PC-3 (cell line): ENCODE measurements at regions of chr1 and their contacts with region 1.

Region 1: DNA sequence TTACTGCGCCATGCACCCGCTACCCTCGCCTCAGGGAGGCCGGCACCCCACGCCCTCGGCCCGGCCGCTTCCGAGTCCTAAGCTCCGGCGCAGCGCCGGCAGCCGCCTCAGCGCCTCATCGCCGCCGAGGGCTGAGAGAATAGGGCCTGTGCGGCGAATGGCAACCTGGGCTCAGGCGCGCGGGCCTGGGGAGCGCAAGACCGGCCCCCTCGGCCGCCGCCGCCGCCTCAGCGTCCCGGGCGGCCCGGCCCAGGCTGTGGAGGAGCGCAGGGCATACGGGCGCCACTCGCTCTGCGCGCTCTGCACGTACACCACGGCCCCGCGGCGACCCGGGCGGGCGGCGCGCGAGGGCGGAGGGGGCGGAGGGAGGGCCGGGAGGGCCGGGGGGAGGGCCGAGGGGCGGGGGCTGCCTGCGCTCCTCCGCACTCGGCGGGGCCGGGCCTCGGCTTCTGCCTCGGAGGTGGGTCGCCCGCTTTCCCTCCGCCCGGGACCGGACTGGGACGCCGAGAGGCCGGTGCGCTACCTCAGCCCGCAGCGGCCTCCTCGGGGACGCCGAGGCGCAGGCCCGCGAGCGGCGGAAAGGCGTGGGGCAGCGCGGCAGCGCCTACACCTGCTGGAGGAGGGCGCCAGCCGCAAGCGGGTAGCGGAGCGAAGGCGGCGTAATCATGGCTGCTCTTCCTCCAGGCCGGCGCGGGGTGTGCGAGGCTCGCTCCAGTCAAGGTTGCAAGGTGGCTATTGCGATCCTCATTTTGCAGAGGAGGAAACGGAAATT is at the start of gene EGLN1:
- DNase-seq: peak; percentile 88
- ATAC-seq: peak; percentile 69
- H3K4me3 ChIP-seq: peak within 1 kb of the TSS; percentile 85
- H3K27ac ChIP-seq: peak within 1 kb of the TSS; percentile 77
- H3K4me1 ChIP-seq: peaks cover 43% of the 10 kb centered on the region
- H3K27me3 ChIP-seq: no peaks in the 10 kb centered on the region
- CTCF ChIP-seq: peak; percentile 48
- total RNA-seq, gene EGLN1: 37.0 and 44.9 TPM in 2 replicates

Region 2: DNA sequence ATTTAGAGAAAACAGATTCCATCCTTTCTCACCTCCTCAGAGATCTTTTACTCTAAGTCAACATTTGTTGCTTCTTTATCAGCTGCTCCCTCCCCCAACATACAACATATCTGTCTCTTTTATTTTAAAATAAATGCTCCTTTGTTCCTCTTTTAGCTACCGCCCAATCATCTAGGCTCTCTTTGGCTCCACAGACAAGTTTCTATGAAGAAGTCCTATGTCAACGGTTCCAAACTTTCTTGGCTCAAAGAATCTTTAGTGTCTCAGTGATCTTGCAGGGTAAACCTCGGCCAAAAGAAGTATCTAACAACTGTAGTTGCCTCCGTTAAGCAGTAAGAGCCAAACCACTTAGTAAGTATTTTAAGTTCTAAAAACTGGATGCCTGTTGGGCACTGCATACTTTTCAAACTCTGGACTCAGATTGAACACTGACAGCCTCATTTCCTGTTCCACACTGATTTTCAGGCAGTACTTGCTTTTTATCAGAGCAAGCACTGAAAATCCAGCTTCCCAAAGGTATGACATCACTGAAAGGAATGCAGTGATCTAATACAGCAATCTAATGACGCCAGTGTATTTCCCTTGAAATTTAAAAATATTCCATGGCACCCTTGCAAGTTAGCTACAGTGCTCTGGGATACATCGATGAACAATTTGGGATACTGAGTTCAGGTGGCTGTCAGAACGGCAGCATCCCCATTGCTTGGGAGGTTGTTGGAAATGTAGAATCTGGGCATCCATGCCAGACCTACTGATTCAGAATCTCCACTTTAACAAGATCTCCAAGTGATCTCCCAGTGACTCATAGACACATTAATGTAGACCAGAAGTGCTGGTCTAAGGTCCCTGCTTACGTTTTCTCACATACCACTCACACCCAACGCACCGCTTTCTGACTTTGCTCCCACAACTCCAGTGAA is 26.8 kb before region 1 on chr1:
- CTCF ChIA-PET with region 1: no interaction called
- POLR2A ChIA-PET with region 1: no interaction called
- intact Hi-C with region 1: loop called (anchors 2 kb)
- DNase-seq: peak; percentile 88
- ATAC-seq: peak; percentile 90
- H3K4me3 ChIP-seq: peak overlapping the region; percentile 14; the same call in 1 of the 2 replicates
- H3K27ac ChIP-seq: peak overlapping the region; percentile 88
- H3K4me1 ChIP-seq: peaks cover 33% of the 10 kb centered on the region
- H3K27me3 ChIP-seq: no peaks in the 10 kb centered on the region
- CTCF ChIP-seq: no peak

Region 3: GRCh38 chr1:231460614-231461013 is 38.4 kb after region 1 on chr1:
- CTCF ChIA-PET with region 1: no interaction called
- POLR2A ChIA-PET with region 1: no interaction called
- intact Hi-C with region 1: no loop called
- DNase-seq: no peak
- ATAC-seq: no peak
- H3K4me3 ChIP-seq: no peak overlapping the region
- H3K27ac ChIP-seq: no peak overlapping the region
- H3K4me1 ChIP-seq: no peaks in the 10 kb centered on the region
- H3K27me3 ChIP-seq: no peaks in the 10 kb centered on the region
- CTCF ChIP-seq: no peak

Region 4: GRCh38 chr1:231528172-231529029 is 106.2 kb after region 1 on chr1 and contains the start of gene TSNAX:
- CTCF ChIA-PET with region 1: no interaction called
- POLR2A ChIA-PET with region 1: no interaction called
- intact Hi-C with region 1: loop called (anchors 1 kb)
- DNase-seq: peak; percentile 97
- ATAC-seq: peak; percentile 92
- H3K4me3 ChIP-seq: peak within 1 kb of the TSS; percentile 93
- H3K27ac ChIP-seq: peak within 1 kb of the TSS; percentile 71
- H3K4me1 ChIP-seq: peaks cover 21% of the 10 kb centered on the region
- H3K27me3 ChIP-seq: no peaks in the 10 kb centered on the region
- CTCF ChIP-seq: no peak
- total RNA-seq, gene TSNAX: 30.5 and 33.1 TPM in 2 replicates

Region 5: DNA sequence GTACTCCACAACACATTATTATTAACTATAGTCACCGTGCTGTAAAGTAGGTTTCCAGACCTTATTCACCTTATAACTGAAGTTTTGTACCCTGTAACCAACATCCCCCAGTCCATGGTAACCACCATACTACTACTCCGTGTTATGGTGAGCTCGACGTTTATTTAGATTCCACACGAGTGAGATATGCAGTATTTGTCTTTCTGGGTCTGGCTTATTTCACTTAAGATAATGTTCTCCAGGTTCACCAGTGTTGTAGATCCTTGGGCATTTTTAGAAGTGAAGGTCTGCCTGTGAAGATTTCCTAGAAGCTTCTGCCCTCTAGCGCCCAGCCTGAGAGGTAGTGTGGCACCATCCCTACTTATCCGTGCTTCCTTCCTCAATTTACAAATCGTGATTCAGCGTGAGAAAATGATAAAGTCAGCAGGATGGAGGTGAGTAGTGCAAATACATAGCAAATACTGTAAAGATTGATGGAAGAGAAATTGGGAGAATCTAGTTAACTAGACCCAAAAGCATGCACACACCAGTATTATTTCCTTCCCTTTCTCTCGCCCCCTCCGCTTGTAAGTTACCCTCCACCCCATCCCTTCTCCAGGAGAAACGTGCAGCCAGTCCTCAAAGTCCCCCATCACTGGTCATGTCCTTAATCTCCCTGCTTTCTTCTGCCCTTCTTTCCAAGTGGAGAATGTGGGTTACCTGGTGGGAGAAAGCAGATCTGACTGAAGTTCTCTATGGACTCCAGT is 168.4 kb after region 1 on chr1:
- CTCF ChIA-PET with region 1: no interaction called
- POLR2A ChIA-PET with region 1: no interaction called
- intact Hi-C with region 1: loop called (anchors 1 kb)
- DNase-seq: peak; percentile 81
- ATAC-seq: peak; percentile 99
- H3K4me3 ChIP-seq: no peak overlapping the region
- H3K27ac ChIP-seq: no peak overlapping the region
- H3K4me1 ChIP-seq: peaks cover 3% of the 10 kb centered on the region; the same call in 1 of the 2 replicates
- H3K27me3 ChIP-seq: no peaks in the 10 kb centered on the region
- CTCF ChIP-seq: peak; percentile 95